ENCODE measurements at regions of chr10 and their contacts with region 1.

Region 1: GRCh38 chr10:22003079-22003913 is at the start of gene DNAJC1:
- DNase-seq: peak; percentile 99
- H3K4me3 Mint-ChIP-seq: peak within 1 kb of the TSS; percentile 94
- H3K27ac Mint-ChIP-seq: peak within 1 kb of the TSS; percentile 84
- H3K4me1 Mint-ChIP-seq: peaks cover 34% of the 10 kb centered on the region
- H3K27me3 Mint-ChIP-seq: peaks cover 5% of the 10 kb centered on the region
- total RNA-seq, gene DNAJC1: 18.0 to 18.8 TPM

Region 2: DNA sequence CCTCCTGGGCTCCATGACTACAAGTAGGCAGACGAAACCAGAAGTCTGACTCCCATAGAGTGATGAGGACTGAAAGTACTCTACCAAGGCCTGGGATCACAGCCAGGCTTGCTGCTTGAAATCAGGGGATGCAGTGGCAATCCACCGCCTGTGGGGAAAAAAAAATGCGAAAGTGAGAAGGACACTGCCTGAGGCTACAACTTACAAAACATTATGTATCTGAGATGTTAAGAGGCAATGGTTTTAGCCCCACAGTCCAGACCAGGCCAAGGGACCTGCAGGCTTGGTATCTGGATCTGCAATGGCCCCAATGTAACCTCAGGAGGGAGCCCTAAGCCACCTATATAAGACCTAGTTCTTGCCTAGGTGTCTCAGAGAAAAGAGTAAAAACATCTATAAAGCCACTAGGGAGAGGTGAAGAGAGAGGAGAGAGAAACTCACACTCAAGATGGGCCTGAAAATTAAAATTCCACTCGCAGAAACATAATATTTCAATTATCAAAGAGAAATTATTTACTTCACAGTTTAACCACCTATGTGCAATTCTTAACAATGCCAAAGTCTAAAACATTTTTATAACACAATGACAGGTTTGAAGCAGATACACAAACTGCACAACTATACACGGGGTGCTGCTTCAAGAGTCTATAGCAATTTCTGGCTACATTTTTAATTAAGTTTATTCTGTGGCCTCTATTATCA is 13.7 kb before region 1 on chr10:
- CTCF ChIA-PET with region 1: interaction called, 10 read pairs
- intact Hi-C with region 1: no loop called
- DNase-seq: peak; percentile 54
- H3K4me3 Mint-ChIP-seq: no peak overlapping the region
- H3K27ac Mint-ChIP-seq: no peak overlapping the region
- H3K4me1 Mint-ChIP-seq: no peaks in the 10 kb centered on the region
- H3K27me3 Mint-ChIP-seq: no peaks in the 10 kb centered on the region

Region 3: GRCh38 chr10:22251751-22252223 is 248.5 kb after region 1 on chr10:
- CTCF ChIA-PET with region 1: no interaction called
- intact Hi-C with region 1: loop called (anchors 1 kb)
- DNase-seq: peak; percentile 74
- H3K4me3 Mint-ChIP-seq: peak overlapping the region; percentile 99
- H3K27ac Mint-ChIP-seq: peak overlapping the region; percentile 99
- H3K4me1 Mint-ChIP-seq: peaks cover 34% of the 10 kb centered on the region
- H3K27me3 Mint-ChIP-seq: peaks cover 5% of the 10 kb centered on the region

Region 4: DNA sequence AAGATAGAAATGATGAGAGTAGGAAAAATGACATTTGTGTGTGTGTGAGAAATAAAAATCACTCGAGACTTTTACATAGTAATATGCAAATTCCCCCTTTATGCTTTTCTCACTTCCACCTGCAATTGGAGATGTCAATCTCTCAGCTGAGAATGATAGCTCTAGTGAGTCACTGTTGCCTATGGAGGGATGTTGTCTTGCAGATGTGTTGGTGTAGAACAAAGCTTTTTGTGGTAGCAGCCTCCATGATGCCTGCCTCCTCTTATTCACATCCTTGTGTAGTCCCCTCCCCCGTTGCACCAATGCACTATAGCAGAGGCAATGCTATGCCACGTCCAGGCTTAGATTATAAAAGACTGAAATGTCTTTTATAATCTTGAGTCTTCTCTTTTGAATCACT is 375.8 kb after region 1 on chr10:
- CTCF ChIA-PET with region 1: no interaction called
- intact Hi-C with region 1: loop called (anchors 2 kb)
- DNase-seq: peak; percentile 75
- H3K4me3 Mint-ChIP-seq: no peak overlapping the region
- H3K27ac Mint-ChIP-seq: no peak overlapping the region
- H3K4me1 Mint-ChIP-seq: peaks cover 17% of the 10 kb centered on the region
- H3K27me3 Mint-ChIP-seq: peaks cover 3% of the 10 kb centered on the region

Region 5: DNA sequence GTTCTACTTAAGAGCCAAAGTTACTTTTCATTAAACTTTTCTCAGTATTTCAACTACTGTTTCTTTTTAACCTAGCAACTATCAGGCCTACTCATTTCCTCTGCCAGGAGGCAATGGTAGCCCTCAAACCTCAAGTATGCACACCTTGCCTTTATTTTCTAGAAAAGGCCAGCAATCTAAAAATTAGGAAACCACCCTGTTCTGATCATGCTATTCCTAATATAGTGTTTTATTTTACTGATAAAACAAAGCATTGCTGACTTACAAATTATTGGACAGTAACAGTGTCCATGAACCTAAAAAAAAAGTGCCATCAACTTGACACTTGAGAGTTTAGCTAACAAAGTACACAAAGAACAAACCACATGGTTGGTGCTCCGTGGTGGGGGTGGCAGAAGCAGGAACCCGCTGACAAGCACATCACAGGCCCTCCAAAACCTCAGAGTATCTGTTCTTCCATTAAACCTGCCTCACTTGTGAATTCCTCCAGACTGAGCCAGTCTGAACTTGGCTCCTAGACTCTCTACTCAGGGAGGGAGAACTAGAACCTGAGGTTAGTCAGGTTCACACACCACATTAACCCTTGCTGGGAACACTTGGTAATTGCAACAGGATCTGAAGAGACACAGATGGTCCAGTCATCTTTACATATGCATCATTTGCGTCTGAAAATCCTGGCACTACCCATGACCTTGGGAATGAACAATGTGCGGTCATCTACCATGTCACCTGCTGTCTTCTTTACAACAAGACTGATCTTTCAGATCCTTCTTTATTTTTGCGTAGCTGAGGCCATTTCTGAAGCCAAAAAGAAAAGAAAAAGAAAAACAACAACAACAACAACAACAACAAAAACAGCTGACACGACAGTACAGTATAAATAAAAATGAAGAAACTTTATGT is 679.2 kb after region 1 on chr10:
- CTCF ChIA-PET with region 1: no interaction called
- intact Hi-C with region 1: loop called (anchors 1 kb)
- DNase-seq: peak; percentile 73
- H3K4me3 Mint-ChIP-seq: peak overlapping the region; percentile 60
- H3K27ac Mint-ChIP-seq: peak overlapping the region; percentile 97
- H3K4me1 Mint-ChIP-seq: peaks cover 86% of the 10 kb centered on the region
- H3K27me3 Mint-ChIP-seq: no peaks in the 10 kb centered on the region

Region 6: GRCh38 chr10:23067939-23068775 is 1064.9 kb after region 1 on chr10:
- CTCF ChIA-PET with region 1: no interaction called
- intact Hi-C with region 1: loop called (anchors 5 kb)
- DNase-seq: peak; percentile 79
- H3K4me3 Mint-ChIP-seq: no peak overlapping the region
- H3K27ac Mint-ChIP-seq: no peak overlapping the region
- H3K4me1 Mint-ChIP-seq: no peaks in the 10 kb centered on the region
- H3K27me3 Mint-ChIP-seq: peaks cover 2% of the 10 kb centered on the region